CD4-positive, alpha-beta memory T cell (primary cell): ENCODE measurements at regions of chr16 and their contacts with region 1.

Region 1: DNA sequence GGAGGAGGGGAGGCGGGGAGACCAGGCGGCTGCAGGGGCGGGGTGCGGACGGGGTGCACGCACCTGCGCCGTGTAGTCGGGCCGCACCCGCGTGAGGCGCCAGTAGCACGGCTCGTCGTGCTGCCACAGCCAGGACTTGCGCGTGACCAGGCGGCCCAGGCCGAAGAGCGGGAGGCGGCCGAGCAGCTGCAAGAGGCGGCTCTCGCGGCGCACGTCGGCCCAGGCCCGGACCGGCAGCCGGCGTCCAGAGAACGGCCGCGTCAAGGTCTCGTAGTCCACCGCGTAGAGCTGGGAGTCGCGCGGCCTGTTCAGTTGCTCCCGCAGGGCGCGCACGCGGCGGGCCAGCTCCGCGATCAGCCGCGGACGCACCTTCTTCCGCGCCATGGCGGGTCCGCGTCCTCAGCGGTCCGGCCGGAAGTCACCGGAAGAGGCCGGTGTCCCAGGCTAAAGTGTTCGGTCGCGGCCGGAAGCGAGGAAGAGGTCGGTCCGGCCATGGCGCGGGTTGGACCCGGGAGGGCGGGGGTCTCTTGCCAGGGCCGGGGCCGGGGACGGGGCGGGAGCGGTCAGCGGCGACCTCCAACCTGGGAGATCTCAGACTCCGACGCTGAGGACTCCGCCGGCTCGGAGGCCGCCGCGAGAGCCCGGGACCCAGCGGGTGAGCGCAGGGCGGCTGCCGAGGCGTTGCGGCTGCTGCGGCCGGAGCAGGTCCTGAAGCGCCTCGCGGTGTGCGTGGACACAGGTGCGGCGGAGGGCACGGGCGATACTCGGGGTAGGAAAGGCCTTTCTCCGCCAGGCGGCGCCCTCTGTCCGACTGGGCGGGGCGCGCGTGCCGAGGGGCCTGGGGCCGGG is at the starts of genes EME2 and MRPS34:
- DNase-seq: peak; percentile 72 to 78 (median 74)
- H3K4me3 ChIP-seq: peak within 1 kb of the TSS; percentile 45 to 88
- H3K4me3 Mint-ChIP-seq: peak within 1 kb of the TSS; percentile 85 to 98 (median 96)
- H3K27ac ChIP-seq: peak within 1 kb of the TSS; percentile 72
- H3K27ac Mint-ChIP-seq: peak within 1 kb of the TSS; percentile 90 to 97 (median 95)
- H3K4me1 ChIP-seq: peaks cover 29% of the 10 kb centered on the region
- H3K4me1 Mint-ChIP-seq: peaks cover 11 to 32% (median 15%) of the 10 kb centered on the region in 4 donors
- H3K27me3 ChIP-seq: no peaks in the 10 kb centered on the region
- H3K27me3 Mint-ChIP-seq: no peaks in the 10 kb centered on the region
- total RNA-seq, gene EME2: 32.9 to 33.1 TPM
- total RNA-seq, gene MRPS34: 57.6 to 67.3 TPM

Region 2: DNA sequence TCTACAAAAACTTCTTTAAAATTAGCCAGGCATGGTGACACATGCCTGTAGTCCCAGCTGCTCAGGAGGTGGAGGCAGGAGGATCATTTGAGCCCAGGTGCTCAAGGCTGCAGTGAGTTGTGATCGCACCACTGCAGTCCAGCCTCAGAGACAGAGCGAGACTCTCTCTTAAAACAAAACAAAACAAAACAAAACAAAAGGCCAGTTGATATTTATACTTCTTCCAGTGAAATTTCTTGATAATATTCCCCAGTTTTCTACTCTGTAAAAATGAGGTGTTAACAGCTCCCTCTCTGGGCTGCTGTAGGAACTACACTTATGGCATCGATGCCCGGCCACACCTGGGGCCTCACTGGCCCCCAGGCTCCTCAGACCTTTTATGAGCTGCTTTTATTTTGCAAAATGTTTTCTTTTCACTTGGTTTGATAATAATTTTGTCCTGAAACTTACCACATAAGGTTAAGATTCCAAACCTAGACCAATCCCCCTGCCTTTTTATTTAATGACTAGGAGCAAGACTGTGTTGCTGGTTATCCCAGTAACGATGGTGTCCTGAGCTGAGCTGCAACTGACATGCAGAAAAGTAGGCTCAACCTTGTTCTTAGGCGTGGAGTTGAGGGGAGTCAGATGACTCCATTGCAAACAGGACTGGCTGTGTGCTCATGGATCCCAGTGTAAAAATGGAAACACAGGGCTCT is 49.4 kb before region 1 on chr16:
- CTCF ChIA-PET with region 1: no interaction called
- POLR2A ChIA-PET with region 1: no interaction called
- intact Hi-C with region 1: no loop called
- DNase-seq: peak in 4 of 5 donors; percentile 35 to 52 (median 42)
- H3K4me3 ChIP-seq: no peak overlapping the region
- H3K4me3 Mint-ChIP-seq: peak overlapping the region in 4 of 8 donors; percentile 11 to 51 (median 38)
- H3K27ac ChIP-seq: no peak overlapping the region
- H3K27ac Mint-ChIP-seq: peak overlapping the region; percentile 24 to 84 (median 65)
- H3K4me1 ChIP-seq: peaks cover 29% of the 10 kb centered on the region
- H3K4me1 Mint-ChIP-seq: peaks cover 21 to 39% (median 29%) of the 10 kb centered on the region in 4 donors
- H3K27me3 ChIP-seq: no peaks in the 10 kb centered on the region
- H3K27me3 Mint-ChIP-seq: no peaks in the 10 kb centered on the region

Region 3: DNA sequence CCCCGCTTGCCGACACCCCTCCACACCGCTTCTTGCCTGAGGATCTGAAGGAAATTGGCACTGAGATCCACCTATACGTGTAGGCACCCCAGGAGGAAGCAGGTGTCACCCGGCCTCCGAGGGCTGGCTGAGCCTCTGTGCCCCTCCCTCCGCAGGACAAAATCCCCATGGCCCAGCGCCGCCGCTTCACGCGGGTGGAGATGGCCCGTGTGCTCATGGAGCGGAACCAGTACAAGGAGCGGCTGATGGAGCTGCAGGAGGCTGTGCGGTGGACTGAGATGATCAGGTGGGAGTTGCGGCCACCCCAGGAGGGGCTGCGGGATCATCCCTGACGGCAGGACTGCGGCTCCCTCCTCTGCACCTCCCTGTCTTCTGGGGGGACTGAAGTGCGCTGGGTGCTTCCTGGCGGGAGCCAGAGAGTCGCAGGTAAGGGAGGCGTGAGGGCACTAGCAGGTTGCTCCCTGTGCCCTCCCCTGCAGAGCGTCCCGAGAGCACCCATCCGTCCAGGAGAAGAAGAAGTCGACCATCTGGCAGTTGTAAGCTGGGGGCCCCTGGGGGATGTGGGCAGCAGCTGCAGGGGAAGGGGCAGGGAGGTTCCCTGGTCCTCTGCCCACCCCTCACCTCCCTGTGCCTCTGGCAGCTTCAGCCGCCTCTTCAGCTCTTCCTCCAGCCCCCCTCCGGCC is 10.6 kb before region 1 on chr16:
- CTCF ChIA-PET with region 1: no interaction called
- POLR2A ChIA-PET with region 1: interaction called, 185 read pairs
- intact Hi-C with region 1: no loop called
- DNase-seq: no peak
- H3K4me3 ChIP-seq: no peak overlapping the region
- H3K4me3 Mint-ChIP-seq: no peak overlapping the region
- H3K27ac ChIP-seq: no peak overlapping the region
- H3K27ac Mint-ChIP-seq: peak overlapping the region in 2 of 7 donors; percentile 17 to 38
- H3K4me1 ChIP-seq: peaks cover 2% of the 10 kb centered on the region
- H3K4me1 Mint-ChIP-seq: peaks cover 3 to 4% (median 3%) of the 10 kb centered on the region in 4 donors
- H3K27me3 ChIP-seq: no peaks in the 10 kb centered on the region
- H3K27me3 Mint-ChIP-seq: no peaks in the 10 kb centered on the region

Region 4: GRCh38 chr16:1826691-1827575 is 54.0 kb after region 1 on chr16 and contains the starts of genes FAHD1 and HAGH:
- CTCF ChIA-PET with region 1: no interaction called
- POLR2A ChIA-PET with region 1: interaction called, 36 read pairs
- intact Hi-C with region 1: loop called (anchors 2 kb)
- DNase-seq: peak; percentile 90 to 98 (median 93)
- H3K4me3 ChIP-seq: peak within 1 kb of the TSS; percentile 78 to 89
- H3K4me3 Mint-ChIP-seq: peak within 1 kb of the TSS; percentile 92 to 96 (median 94)
- H3K27ac ChIP-seq: peak within 1 kb of the TSS; percentile 73
- H3K27ac Mint-ChIP-seq: peak within 1 kb of the TSS; percentile 94 to 97 (median 95)
- H3K4me1 ChIP-seq: peaks cover 43% of the 10 kb centered on the region
- H3K4me1 Mint-ChIP-seq: peaks cover 17 to 58% (median 39%) of the 10 kb centered on the region in 4 donors
- H3K27me3 ChIP-seq: no peaks in the 10 kb centered on the region
- H3K27me3 Mint-ChIP-seq: no peaks in the 10 kb centered on the region
- total RNA-seq, gene FAHD1: 7.8 to 9.6 TPM
- total RNA-seq, gene HAGH: 73.7 to 77.8 TPM

Region 5: DNA sequence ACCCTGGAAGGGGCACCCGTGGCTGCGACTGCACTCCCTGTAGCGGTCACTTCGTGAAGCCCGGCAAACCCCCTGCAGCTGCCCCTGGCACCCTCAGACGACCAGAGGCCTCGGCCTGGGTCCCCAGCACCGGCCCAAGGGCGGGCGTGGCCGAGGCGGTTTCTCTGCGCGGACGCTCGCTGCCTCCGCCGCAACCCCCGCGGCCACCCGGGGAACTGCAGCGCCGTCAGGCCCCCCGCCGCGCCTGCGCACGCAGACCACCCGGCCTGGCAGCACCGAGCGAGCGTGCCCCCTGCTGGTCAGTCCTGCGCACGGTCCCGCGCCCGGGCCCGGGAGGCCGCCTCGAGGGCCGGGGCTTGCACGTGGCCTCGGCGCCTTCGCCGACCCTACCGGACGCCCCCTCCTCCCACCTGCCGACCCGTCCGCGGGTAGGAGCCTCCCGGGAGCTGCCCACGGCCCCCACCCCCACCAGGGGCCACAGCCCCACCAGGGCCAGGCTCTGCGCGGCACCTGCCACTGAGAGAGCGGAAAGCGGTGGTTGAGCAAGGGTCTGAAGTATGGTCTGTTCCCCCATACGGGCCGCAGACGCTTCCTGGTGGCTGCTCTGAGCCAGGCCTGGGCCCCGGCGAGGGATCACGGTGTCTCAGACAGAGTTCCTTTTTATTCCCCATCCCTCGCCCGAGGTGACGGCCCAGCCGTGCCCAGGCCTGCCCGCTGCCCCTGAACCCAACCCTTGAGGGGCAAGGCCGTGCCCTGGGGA is 156.8 kb after region 1 on chr16:
- CTCF ChIA-PET with region 1: no interaction called
- POLR2A ChIA-PET with region 1: interaction called, 3 read pairs
- intact Hi-C with region 1: loop called (anchors 1 kb)
- DNase-seq: peak; percentile 82 to 92 (median 90)
- H3K4me3 ChIP-seq: peak overlapping the region in 1 of 2 donors; percentile 28
- H3K4me3 Mint-ChIP-seq: peak overlapping the region in 4 of 8 donors; percentile 39 to 68 (median 52)
- H3K27ac ChIP-seq: peak overlapping the region; percentile 13
- H3K27ac Mint-ChIP-seq: no peak overlapping the region
- H3K4me1 ChIP-seq: peaks cover 6% of the 10 kb centered on the region
- H3K4me1 Mint-ChIP-seq: peaks cover 2 to 4% (median 4%) of the 10 kb centered on the region in 4 donors
- H3K27me3 ChIP-seq: no peaks in the 10 kb centered on the region
- H3K27me3 Mint-ChIP-seq: no peaks in the 10 kb centered on the region